CD4-positive, alpha-beta memory T cell (primary cell): ENCODE measurements at regions of chr5 and their contacts with region 1.

Region 1: DNA sequence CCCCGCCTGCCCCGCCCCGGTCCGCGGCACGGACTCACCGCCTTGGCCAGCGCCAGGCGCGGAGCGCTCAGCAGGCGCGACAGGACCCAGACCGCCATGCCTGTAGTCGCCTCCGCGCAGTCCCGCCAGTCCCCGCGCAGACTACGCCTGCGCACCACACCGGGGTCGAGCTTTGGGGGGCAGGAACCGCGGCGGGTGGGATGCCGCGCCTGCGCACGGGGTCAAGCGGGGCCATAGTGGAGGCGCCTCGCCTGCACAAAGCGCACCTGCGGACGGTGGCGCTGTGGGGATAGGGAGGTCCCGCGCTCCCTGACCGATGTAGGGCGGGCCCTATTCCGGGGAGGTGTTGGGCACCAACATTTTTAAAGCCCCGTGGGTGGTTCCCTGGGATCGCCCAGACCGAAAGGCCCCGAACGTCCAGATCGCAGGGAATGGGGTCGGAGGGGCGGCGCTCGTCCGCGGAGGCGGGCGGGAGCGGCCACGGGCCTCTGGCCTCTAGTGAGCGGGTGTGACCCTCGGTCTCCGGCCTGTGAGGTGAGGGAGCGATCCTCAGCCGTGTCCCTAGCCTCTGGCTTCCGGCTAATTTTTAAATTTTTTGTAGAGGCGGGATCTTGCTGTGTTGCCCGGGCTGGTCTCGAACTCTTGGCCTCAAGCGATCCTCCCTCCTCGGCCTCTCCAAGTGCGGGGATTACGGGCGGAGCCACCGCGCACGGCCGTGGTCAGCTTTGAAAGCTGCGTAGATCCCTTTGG is 70.8 kb upstream of the LPCAT1 start:
- DNase-seq: peak; percentile 3 to 48 (median 39)
- H3K4me3 ChIP-seq: peak overlapping the region in 1 of 2 donors; percentile 22
- H3K4me3 Mint-ChIP-seq: peak overlapping the region in 7 of 8 donors; percentile 46 to 81 (median 68)
- H3K27ac ChIP-seq: no peak overlapping the region
- H3K27ac Mint-ChIP-seq: peak overlapping the region in 1 of 7 donors; percentile 51
- H3K4me1 ChIP-seq: no peaks in the 10 kb centered on the region
- H3K4me1 Mint-ChIP-seq: peaks cover 0 to 5% (median 3%) of the 10 kb centered on the region in 4 donors
- H3K27me3 ChIP-seq: no peaks in the 10 kb centered on the region
- H3K27me3 Mint-ChIP-seq: no peaks in the 10 kb centered on the region

Region 2: DNA sequence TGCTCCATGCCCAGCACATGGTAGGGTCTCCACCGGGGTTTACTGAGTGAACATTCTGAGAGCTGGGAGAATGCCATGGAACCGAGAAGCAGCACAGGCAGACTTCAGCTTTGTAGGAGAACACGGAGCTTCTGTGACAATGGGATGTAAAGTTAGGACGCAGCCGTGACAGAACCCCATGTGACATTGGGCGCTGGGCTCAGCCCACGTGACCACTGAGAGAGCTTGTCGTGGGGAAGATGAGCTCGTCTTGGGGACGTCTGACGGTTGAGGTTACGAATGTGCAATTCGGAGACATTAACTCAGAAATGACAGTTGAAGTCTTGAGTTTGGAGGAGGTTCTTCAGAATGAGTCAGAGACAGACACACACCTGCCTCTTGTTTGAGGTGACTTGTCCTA is 1362.9 kb before region 1 on chr5:
- CTCF ChIA-PET with region 1: no interaction called
- POLR2A ChIA-PET with region 1: no interaction called
- intact Hi-C with region 1: loop called (anchors 10 kb)
- DNase-seq: no peak
- H3K4me3 ChIP-seq: no peak overlapping the region
- H3K4me3 Mint-ChIP-seq: no peak overlapping the region
- H3K27ac ChIP-seq: no peak overlapping the region
- H3K27ac Mint-ChIP-seq: peak overlapping the region in 1 of 7 donors; percentile 46
- H3K4me1 ChIP-seq: no peaks in the 10 kb centered on the region
- H3K4me1 Mint-ChIP-seq: peaks cover 0 to 2% (median 0%) of the 10 kb centered on the region in 4 donors
- H3K27me3 ChIP-seq: no peaks in the 10 kb centered on the region
- H3K27me3 Mint-ChIP-seq: no peaks in the 10 kb centered on the region

Region 3: GRCh38 chr5:1536322-1536845 is 58.1 kb before region 1 on chr5:
- CTCF ChIA-PET with region 1: no interaction called
- POLR2A ChIA-PET with region 1: no interaction called
- intact Hi-C with region 1: loop called (anchors 5 kb)
- DNase-seq: peak; percentile 67 to 89 (median 71)
- H3K4me3 ChIP-seq: peak overlapping the region; percentile 26 to 30
- H3K4me3 Mint-ChIP-seq: peak overlapping the region; percentile 77 to 90 (median 84)
- H3K27ac ChIP-seq: peak overlapping the region; percentile 72
- H3K27ac Mint-ChIP-seq: peak overlapping the region; percentile 88 to 98 (median 92)
- H3K4me1 ChIP-seq: peaks cover 26% of the 10 kb centered on the region
- H3K4me1 Mint-ChIP-seq: peaks cover 20 to 35% (median 28%) of the 10 kb centered on the region in 4 donors
- H3K27me3 ChIP-seq: no peaks in the 10 kb centered on the region
- H3K27me3 Mint-ChIP-seq: no peaks in the 10 kb centered on the region